ENCODE measurements at regions of chr16 and their contacts with region 1.

Region 1: DNA sequence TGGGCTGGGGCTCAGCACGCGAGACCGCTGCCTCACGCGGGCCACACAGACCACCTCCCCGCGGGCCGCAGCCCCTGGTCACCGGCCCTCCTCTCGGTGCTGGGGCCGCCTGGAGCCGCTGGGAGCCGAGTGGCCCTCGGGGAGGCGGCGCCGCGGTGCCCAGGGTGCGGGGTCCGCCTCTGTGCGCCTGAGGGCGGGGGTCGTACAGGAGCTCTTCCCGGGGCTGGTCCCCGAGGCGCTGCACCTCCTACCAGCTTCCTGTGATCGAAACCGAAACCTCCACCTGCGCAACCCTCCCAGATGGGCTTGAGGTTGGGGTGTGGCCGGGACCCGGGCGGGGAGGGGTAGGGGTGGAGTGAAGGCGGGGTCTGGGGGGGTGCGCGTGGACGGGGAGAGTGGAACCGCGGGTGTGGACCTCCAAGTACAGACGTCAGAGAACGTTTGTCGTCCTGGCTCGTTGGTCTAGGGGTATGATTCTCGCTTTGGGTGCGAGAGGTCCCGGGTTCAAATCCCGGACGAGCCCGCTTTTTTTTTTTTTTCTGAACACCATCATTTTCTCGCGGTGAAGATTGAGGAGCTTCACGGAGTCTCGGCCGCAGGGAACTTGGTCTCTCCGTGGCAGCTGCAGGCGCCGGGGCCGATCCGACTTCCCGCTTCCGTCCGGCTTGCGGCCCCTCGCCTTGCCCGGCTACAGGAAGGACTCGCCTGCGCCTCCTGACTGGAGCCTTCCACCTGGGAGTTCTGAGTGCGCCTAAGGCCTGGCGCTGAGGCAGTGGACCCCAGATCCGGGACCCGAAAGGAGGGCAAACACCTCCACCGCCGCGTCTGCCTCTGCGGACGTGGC is 23.9 kb downstream of the ZNF213 start:
- DNase-seq: no peak
- ATAC-seq: peak; percentile 65
- H3K4me3 ChIP-seq: peak overlapping the region; percentile 76 to 84
- H3K27ac ChIP-seq: peak overlapping the region; percentile 85
- H3K4me1 ChIP-seq: peaks cover 9% of the 10 kb centered on the region
- H3K27me3 ChIP-seq: no peaks in the 10 kb centered on the region
- CTCF ChIP-seq: no peak

Region 2: DNA sequence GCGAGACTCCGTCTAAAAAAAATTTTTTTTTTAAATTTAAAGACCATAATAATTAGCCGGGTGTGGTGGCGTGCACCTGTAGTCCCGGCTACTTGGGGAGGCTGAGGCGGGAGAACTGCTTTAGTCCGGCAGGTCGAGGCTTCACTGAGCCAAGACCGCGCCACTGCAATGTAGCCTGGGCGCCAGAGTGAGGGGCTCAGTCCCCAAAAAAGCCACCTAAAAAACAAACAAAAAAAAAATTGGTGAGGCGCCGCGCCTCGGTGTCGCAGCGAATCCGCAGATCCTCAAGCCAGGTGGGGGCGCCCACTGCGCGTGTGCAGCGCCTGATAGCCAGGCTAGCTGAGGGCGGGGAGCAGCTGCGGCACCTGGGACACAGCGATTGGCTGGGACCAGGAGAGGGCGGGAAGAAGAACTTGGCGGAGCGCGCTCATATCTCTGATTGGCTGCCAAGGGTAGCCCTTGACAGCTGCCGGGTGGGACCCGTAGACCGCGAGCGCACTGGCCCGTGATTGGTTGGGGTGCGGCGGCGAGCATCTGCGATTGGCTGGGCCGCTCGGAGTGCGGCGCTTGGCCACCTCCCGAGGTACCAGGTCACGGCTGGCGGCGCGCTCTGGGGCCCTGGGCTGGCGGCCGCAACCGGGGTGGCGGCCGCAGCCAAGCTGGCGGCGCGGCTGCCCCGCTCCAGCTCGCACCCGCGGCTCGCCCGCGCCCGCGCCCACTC is 155.0 kb before region 1 on chr16:
- CTCF ChIA-PET with region 1: interaction called, 11 read pairs
- POLR2A ChIA-PET with region 1: no interaction called
- in situ Hi-C with region 1: no loop called
- intact Hi-C with region 1: no loop called
- DNase-seq: peak; percentile 98
- ATAC-seq: peak; percentile 97
- H3K4me3 ChIP-seq: peak overlapping the region; percentile 36 to 37
- H3K27ac ChIP-seq: peak overlapping the region; percentile 69
- H3K4me1 ChIP-seq: peaks cover 25% of the 10 kb centered on the region
- H3K27me3 ChIP-seq: no peaks in the 10 kb centered on the region
- CTCF ChIP-seq: peak; percentile 92

Region 3: DNA sequence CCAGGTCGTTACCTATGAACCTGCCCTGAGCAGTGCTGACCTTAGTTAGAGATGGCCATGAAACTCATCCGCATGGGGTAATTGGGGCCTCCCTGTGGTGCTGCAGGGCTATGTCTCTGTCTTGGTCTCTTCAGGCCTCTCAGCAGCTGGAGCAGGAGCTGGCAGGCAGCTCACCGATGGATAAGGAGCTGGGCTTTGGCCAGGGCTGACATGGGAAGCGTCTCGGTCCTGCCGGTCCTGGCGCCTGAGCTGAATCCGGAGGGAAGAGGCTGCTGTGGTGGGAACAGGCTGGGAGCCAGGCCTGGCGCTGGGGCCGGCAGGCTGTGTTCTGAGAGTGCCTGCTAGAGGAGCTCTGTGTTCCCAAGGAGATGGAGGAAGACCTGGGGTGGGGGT is 83.2 kb before region 1 on chr16:
- CTCF ChIA-PET with region 1: no interaction called
- POLR2A ChIA-PET with region 1: interaction called, 13 read pairs
- in situ Hi-C with region 1: no loop called
- intact Hi-C with region 1: no loop called
- DNase-seq: no peak
- ATAC-seq: peak; percentile 37
- H3K4me3 ChIP-seq: no peak overlapping the region
- H3K27ac ChIP-seq: no peak overlapping the region
- H3K4me1 ChIP-seq: no peaks in the 10 kb centered on the region
- H3K27me3 ChIP-seq: no peaks in the 10 kb centered on the region
- CTCF ChIP-seq: no peak

Region 4: GRCh38 chr16:3106205-3106928 is 52.3 kb before region 1 on chr16:
- CTCF ChIA-PET with region 1: no interaction called
- POLR2A ChIA-PET with region 1: no interaction called
- in situ Hi-C with region 1: no loop called
- intact Hi-C with region 1: no loop called
- DNase-seq: no peak
- ATAC-seq: peak; percentile 97
- H3K4me3 ChIP-seq: peak overlapping the region; percentile 60 to 76
- H3K27ac ChIP-seq: peak overlapping the region; percentile 87
- H3K4me1 ChIP-seq: peaks cover 7% of the 10 kb centered on the region; the same call in 1 of the 2 replicates
- H3K27me3 ChIP-seq: no peaks in the 10 kb centered on the region
- CTCF ChIP-seq: no peak

Region 5: GRCh38 chr16:3129137-3130131 is 29.3 kb before region 1 on chr16:
- CTCF ChIA-PET with region 1: interaction called, 16 read pairs
- POLR2A ChIA-PET with region 1: interaction called, 5 read pairs
- in situ Hi-C with region 1: no loop called
- intact Hi-C with region 1: no loop called
- DNase-seq: no peak
- ATAC-seq: peak; percentile 76
- H3K4me3 ChIP-seq: peak overlapping the region; percentile 1 to 6; a peak in 3 of 4 replicates
- H3K27ac ChIP-seq: peak overlapping the region; percentile 41; the same call in 1 of the 2 replicates
- H3K4me1 ChIP-seq: no peaks in the 10 kb centered on the region; the same call in 1 of the 2 replicates
- H3K27me3 ChIP-seq: no peaks in the 10 kb centered on the region
- CTCF ChIP-seq: peak; percentile 97

Region 6: DNA sequence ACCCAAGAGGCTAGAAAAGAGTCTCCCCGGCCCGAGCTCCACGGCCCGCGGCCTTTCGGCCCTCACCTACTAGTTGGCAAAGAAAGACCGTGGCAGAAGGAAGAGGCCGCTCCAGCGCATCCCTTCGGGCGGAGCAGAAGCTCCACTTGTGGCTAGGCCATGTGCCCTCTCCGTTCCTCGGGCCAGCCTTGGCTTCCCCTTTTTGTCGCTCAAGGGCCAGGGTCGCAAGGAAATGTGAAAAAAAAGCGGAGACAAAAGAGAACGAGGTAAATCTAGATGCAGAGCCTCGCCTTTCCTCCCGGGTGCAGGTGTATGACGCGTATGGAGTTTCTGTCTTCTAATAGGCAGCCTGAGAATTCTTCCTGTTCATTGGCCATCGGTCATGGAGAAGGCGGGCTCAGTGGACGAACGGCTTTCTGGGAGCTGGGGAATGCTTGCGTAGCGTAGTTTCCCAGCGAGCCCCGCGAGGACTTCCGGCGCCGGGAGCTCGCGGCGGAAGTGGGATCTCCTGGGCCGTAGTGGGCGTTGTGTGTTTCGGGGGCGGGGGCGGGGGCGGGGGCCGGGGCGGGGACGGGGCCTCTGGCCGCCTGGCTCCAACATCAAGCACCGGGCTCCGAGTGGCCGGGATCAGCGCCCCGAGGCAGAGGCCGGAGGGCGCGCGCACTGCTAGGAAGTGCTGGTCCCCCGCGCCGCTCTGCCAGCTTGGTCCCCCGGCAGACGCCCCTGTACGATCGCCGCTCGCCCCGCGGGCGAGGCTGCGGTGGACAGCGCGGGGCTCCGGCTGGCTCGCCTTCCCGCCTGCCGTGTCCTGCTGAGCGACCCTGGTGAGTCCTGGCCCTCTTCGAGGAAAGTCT is 23.9 kb before region 1 on chr16 and contains the start of gene ZNF213:
- CTCF ChIA-PET with region 1: interaction called, 16 read pairs
- POLR2A ChIA-PET with region 1: interaction called, 10 read pairs
- in situ Hi-C with region 1: no loop called
- intact Hi-C with region 1: no loop called
- DNase-seq: peak; percentile 93
- ATAC-seq: peak; percentile 97
- H3K4me3 ChIP-seq: peak within 1 kb of the TSS; percentile 100
- H3K27ac ChIP-seq: peak within 1 kb of the TSS; percentile 99
- H3K4me1 ChIP-seq: peaks cover 7% of the 10 kb centered on the region; the same call in 1 of the 2 replicates
- H3K27me3 ChIP-seq: no peaks in the 10 kb centered on the region
- CTCF ChIP-seq: no peak
- total RNA-seq, gene ZNF213: 12.3 TPM

Region 7: GRCh38 chr16:3143612-3144320 is 14.9 kb before region 1 on chr16:
- CTCF ChIA-PET with region 1: interaction called, 4 read pairs
- POLR2A ChIA-PET with region 1: interaction called, 11 read pairs
- in situ Hi-C with region 1: no loop called
- intact Hi-C with region 1: no loop called
- DNase-seq: no peak
- ATAC-seq: no peak; the same call in 1 of the 2 replicates
- H3K4me3 ChIP-seq: no peak overlapping the region
- H3K27ac ChIP-seq: no peak overlapping the region
- H3K4me1 ChIP-seq: no peaks in the 10 kb centered on the region
- H3K27me3 ChIP-seq: no peaks in the 10 kb centered on the region
- CTCF ChIP-seq: no peak

Region 8: GRCh38 chr16:3215601-3216262 is 57.0 kb after region 1 on chr16:
- CTCF ChIA-PET with region 1: no interaction called
- POLR2A ChIA-PET with region 1: no interaction called
- in situ Hi-C with region 1: no loop called
- intact Hi-C with region 1: no loop called
- DNase-seq: no peak
- ATAC-seq: no peak; the same call in 1 of the 2 replicates
- H3K4me3 ChIP-seq: no peak overlapping the region
- H3K27ac ChIP-seq: no peak overlapping the region
- H3K4me1 ChIP-seq: no peaks in the 10 kb centered on the region
- H3K27me3 ChIP-seq: no peaks in the 10 kb centered on the region
- CTCF ChIP-seq: no peak